CD4-positive, alpha-beta T cell (primary cell): ENCODE measurements at regions of chr4 and their contacts with region 1.

Region 1: GRCh38 chr4:94207469-94208224 is at the start of gene SMARCAD1:
- DNase-seq: peak; percentile 70 to 95 (median 82)
- ATAC-seq: peak; percentile 85
- H3K4me3 ChIP-seq: peak within 1 kb of the TSS; percentile 75
- H3K4me3 Mint-ChIP-seq: peak within 1 kb of the TSS; percentile 92
- H3K27ac ChIP-seq: peak within 1 kb of the TSS; percentile 82 to 90
- H3K27ac Mint-ChIP-seq: peak within 1 kb of the TSS; percentile 95
- H3K4me1 ChIP-seq: peaks cover 15% of the 10 kb centered on the region
- H3K4me1 Mint-ChIP-seq: peaks cover 54% of the 10 kb centered on the region
- H3K27me3 ChIP-seq: peaks cover 0 to 8% of the 10 kb centered on the region in 2 experiments
- H3K27me3 Mint-ChIP-seq: peaks cover 15% of the 10 kb centered on the region
- CTCF ChIP-seq: no peak
- total RNA-seq, gene SMARCAD1: 10.7 TPM

Region 2: DNA sequence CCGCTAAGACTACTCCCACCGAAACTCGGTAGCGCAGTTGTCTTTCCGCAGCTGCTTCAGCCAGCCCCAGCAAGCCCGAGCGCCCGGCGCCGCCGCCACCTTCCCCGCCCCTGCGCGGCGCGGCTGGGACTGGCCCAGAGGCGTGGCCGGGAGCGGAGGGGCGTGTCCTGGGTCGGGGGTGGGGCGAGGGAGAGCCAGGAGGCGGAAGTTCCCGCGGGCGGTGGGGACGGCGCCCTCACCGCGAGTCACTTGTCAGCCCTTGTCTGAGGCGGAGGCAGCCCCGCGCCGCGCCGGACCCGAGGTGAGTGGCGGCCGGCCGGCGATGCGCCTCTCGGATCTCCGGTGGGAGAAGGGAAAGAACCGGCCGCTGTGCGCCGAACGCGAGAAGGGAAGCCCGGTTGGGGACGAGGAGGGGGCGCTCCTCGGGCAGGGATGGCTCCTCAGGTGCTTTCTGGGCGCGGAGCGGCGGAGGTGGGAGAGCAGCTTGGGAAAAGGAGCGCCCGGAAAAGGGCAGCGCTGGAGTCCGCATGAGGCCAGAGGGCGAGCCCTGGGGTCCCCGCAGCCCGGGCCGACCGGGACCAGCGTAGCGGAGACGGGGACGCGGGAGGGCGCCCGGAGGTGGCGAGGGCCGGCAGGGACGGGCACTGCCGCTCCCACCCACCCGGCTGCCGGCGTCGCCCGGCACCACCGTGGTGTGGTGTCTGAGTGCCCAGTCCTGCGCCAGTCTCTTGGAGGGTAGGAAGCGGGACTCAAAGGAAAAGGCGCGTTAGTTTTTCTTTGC is 244.2 kb after region 1 on chr4 and contains the start of gene PDLIM5:
- CTCF ChIA-PET with region 1: no interaction called
- POLR2A ChIA-PET with region 1: no interaction called
- intact Hi-C with region 1: loop called in 1 of 2 experiments (anchors 5 kb)
- DNase-seq: peak; percentile 78 to 96 (median 86)
- ATAC-seq: peak; percentile 96
- H3K4me3 ChIP-seq: peak within 1 kb of the TSS; percentile 81
- H3K4me3 Mint-ChIP-seq: peak within 1 kb of the TSS; percentile 89
- H3K27ac ChIP-seq: peak within 1 kb of the TSS in 1 of 2 donors; percentile 59
- H3K27ac Mint-ChIP-seq: peak within 1 kb of the TSS; percentile 74
- H3K4me1 ChIP-seq: peaks cover 20% of the 10 kb centered on the region
- H3K4me1 Mint-ChIP-seq: peaks cover 41% of the 10 kb centered on the region
- H3K27me3 ChIP-seq: peaks cover 4 to 16% of the 10 kb centered on the region in 2 experiments
- H3K27me3 Mint-ChIP-seq: peaks cover 28% of the 10 kb centered on the region
- CTCF ChIP-seq: no peak
- total RNA-seq, gene PDLIM5: 23.0 to 23.1 TPM